HEK293 (cell line): ENCODE measurements at regions of chr11 and their contacts with region 1.

Region 1: GRCh38 chr11:6377902-6378639 is 12.2 kb upstream of the SMPD1 start:
- H3K4me3 ChIP-seq: no peak overlapping the region
- H3K27ac ChIP-seq: no peak overlapping the region
- H3K4me1 ChIP-seq: no peaks in the 10 kb centered on the region
- CTCF ChIP-seq: no peak

Region 2: GRCh38 chr11:6022956-6023355 is 355.1 kb before region 1 on chr11:
- CTCF ChIA-PET with region 1: interaction called, 12 read pairs
- POLR2A ChIA-PET with region 1: no interaction called
- H3K4me3 ChIP-seq: no peak overlapping the region
- H3K27ac ChIP-seq: no peak overlapping the region
- H3K4me1 ChIP-seq: no peaks in the 10 kb centered on the region
- CTCF ChIP-seq: no peak

Region 3: DNA sequence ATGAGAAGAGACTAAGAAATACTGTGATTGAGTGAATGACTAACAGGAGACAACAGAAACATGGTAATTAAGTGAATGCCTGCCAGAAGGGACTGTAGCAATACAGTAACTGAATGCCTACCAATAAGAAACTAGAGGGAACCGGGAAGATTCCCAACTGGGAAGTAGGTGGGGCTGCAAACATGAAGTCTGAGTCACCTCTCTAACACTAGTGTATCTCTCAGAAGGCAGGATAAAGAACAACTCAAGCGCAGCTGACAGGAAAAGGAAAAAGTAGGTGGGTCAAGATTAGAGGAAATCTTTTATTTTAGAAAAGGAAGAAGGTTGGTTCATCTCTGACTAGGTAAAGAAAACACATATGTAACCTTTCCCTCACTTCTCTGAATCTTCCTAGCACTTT is 158.7 kb before region 1 on chr11:
- CTCF ChIA-PET with region 1: no interaction called
- POLR2A ChIA-PET with region 1: no interaction called
- H3K4me3 ChIP-seq: no peak overlapping the region
- H3K27ac ChIP-seq: no peak overlapping the region
- H3K4me1 ChIP-seq: no peaks in the 10 kb centered on the region
- CTCF ChIP-seq: no peak

Region 4: GRCh38 chr11:6389921-6390724 is 12.1 kb after region 1 on chr11 and contains the start of gene SMPD1:
- CTCF ChIA-PET with region 1: interaction called, 27 read pairs
- POLR2A ChIA-PET with region 1: interaction called, 8 read pairs
- H3K4me3 ChIP-seq: peak within 1 kb of the TSS; percentile 84
- H3K27ac ChIP-seq: peak within 1 kb of the TSS; percentile 50; the same call in 1 of the 2 replicates
- H3K4me1 ChIP-seq: no peaks in the 10 kb centered on the region
- CTCF ChIP-seq: no peak

Region 5: GRCh38 chr11:6473481-6474422 is 95.7 kb after region 1 on chr11 and contains the start of gene TRIM3:
- CTCF ChIA-PET with region 1: interaction called, 27 read pairs
- POLR2A ChIA-PET with region 1: interaction called, 4 read pairs
- H3K4me3 ChIP-seq: peak within 1 kb of the TSS; percentile 74
- H3K27ac ChIP-seq: peak within 1 kb of the TSS; percentile 50; the same call in 1 of the 2 replicates
- H3K4me1 ChIP-seq: no peaks in the 10 kb centered on the region
- CTCF ChIP-seq: peak; percentile 40; the same call in 1 of the 2 replicates

Region 6: DNA sequence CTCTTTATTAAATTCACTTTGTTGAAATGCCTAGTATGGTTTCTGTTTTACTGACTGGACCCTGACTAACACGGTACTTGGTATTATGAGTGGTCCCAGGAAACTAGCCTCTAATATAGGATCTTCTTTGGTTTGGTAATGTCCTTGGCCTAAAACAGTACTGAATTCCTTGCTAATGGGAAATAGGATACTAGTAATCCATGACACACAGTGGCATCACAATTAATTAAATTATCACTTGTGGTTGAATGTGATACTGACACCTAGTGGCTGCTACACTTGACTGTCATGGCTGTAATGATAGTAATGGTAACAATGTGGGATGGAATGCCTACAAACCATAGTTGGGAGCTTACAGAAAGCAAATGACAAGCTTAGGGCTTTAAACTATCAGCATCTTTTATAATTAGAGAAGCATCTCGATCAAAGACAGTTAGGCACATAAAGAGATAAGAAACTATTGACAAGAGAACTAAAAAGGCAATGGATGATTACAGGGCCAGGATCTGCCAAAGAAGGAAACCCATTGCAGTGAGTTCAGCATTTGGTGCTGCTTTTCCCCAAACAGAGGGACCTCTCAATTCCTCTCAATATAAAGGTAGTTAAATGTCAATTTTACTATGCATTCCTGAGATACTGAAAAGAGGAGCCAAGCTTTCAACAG is 127.6 kb after region 1 on chr11:
- CTCF ChIA-PET with region 1: interaction called, 130 read pairs
- POLR2A ChIA-PET with region 1: no interaction called
- H3K4me3 ChIP-seq: no peak overlapping the region
- H3K27ac ChIP-seq: no peak overlapping the region
- H3K4me1 ChIP-seq: no peaks in the 10 kb centered on the region
- CTCF ChIP-seq: no peak

Region 7: GRCh38 chr11:6682936-6683861 is 305.1 kb after region 1 on chr11 and contains the start of gene MRPL17:
- CTCF ChIA-PET with region 1: interaction called, 24 read pairs
- POLR2A ChIA-PET with region 1: interaction called, 5 read pairs
- H3K4me3 ChIP-seq: peak within 1 kb of the TSS; percentile 90
- H3K27ac ChIP-seq: peak within 1 kb of the TSS; percentile 70
- H3K4me1 ChIP-seq: no peaks in the 10 kb centered on the region
- CTCF ChIP-seq: peak; percentile 77

Region 8: DNA sequence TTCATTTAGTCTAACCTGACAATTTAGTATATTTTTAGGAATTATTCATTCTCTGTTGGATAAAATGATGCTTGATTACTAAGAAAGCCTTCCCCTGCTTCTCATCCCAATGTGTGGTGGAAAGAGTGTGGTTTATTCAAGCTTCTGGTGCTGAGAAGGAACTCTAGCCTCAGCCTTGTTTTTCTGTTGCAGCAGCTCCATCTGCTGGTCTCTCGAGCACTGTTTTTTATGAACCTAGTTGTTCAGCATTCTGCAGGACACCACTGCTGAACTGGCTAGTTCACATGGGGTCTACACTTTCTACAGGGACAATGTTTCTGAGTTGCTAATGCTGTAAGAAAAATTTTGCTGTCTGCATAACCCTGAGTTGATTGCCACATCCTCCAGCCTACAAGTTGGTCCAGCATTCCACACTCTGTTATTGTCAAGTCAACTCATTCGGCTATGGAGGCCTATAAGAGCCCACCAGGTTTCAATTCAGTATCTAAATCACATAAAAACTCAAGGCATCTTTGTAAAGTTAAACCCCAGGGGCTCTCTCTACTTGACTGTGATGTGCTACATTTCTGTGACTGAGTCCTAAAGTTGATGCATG is 379.4 kb after region 1 on chr11:
- CTCF ChIA-PET with region 1: interaction called, 28 read pairs
- POLR2A ChIA-PET with region 1: no interaction called
- H3K4me3 ChIP-seq: no peak overlapping the region
- H3K27ac ChIP-seq: no peak overlapping the region
- H3K4me1 ChIP-seq: no peaks in the 10 kb centered on the region
- CTCF ChIP-seq: peak; percentile 23; the same call in 1 of the 2 replicates